IMR-90 (cell line): ENCODE measurements at regions of chr3 and their contacts with region 1.

Region 1: DNA sequence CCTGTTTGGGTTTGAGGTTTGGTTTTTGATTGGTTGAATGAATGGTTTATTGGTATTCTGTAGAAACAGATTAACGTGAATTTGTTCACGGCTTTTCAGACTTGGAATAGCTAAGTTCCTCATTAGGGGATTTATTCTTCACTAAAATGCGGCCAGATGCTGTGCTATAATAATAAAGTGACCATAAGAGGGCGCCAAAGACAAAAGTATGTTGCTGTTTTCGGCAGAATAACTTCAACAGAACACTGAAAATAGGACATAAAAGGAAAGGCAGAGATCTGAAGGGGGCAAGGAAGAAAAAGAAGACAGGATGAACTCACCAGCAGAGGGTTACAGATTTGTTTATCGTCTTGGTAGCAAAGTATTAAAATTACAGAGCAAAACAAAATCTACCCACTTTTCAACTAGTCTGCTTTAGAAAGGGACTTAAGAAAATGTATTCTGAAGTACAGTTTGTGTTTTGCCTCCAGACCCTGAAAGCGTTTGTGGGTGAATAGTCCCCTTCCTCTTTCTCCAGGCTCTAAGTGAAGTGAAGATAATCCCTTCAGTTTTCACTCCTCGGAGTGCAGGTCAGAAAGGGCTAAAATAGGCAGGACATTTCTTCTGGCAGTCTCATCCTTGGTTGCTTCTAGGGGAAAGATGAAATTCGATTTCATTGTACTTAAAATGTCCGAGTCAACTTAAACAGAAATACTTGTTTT is 147.6 kb downstream of the IL20RB start:
- DNase-seq: peak; percentile 62
- ATAC-seq: peak; percentile 88
- H3K4me3 ChIP-seq: no peak overlapping the region
- H3K27ac ChIP-seq: no peak overlapping the region
- H3K4me1 ChIP-seq: no peaks in the 10 kb centered on the region
- H3K27me3 ChIP-seq: peaks cover 5% of the 10 kb centered on the region
- CTCF ChIP-seq: peak; percentile 70
- POLR2A ChIP-seq: no peak
- RAD21 ChIP-seq: peak; percentile 63

Region 2: DNA sequence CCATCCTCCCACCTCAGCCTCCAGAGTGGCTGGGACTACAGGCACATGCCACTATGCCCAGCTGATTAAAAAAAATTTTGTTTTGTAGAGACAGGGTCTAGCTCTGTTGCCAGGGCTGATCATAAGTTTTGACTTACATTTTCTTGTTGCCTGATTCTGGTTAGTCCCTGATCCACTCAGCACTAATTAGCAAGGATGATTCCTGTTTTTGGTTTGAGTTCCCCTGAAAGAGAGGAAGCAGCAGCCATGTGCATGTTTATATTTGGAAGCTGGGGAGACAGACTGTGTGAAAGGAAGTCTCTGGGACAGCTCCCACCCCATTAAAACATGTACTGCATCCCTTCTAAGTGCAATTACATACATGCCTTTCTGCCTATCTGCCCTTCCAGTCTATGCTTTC is 247.0 kb before region 1 on chr3:
- CTCF ChIA-PET with region 1: no interaction called
- POLR2A ChIA-PET with region 1: no interaction called
- dilution Hi-C with region 1: no loop called
- in situ Hi-C with region 1: no loop called
- intact Hi-C with region 1: no loop called
- DNase-seq: no peak
- ATAC-seq: no peak
- H3K4me3 ChIP-seq: no peak overlapping the region
- H3K27ac ChIP-seq: no peak overlapping the region
- H3K4me1 ChIP-seq: peaks cover 7% of the 10 kb centered on the region
- H3K27me3 ChIP-seq: no peaks in the 10 kb centered on the region
- CTCF ChIP-seq: no peak
- POLR2A ChIP-seq: no peak
- RAD21 ChIP-seq: no peak

Region 3: DNA sequence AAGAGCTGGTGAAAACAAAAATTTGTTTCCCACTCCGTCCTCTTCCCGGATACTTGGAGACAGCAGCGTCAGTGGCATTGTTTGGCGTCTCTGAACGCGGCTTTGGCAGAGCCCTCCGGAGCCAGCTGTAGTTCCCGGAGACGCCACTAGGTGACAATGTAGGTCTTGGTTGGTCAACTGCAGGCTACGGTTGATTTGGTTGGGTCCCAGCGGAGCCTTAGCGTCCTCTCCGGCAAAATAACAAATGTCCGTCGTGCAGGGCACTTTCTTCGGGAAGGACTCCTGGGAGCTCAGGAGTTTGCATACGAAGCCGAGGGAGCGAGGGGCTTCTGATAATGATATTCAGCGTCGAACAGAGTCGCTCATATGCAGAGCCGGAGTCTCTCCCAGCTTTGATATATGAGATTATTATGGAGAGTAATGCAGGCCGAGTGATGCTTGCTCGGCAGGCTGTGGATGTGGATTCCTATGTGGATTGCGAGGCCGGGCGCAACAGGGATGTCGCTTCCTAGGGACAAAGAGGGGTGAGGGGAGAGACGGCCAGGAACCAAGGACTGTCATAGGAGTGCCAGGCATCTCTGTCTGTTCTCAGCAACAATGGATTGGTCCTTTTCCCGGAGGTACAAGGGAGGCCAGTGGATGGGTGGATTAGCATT is 72.8 kb before region 1 on chr3:
- CTCF ChIA-PET with region 1: interaction called, 6 read pairs
- POLR2A ChIA-PET with region 1: no interaction called
- dilution Hi-C with region 1: no loop called
- in situ Hi-C with region 1: no loop called
- intact Hi-C with region 1: loop called (anchors 1 kb)
- DNase-seq: peak; percentile 76
- ATAC-seq: peak; percentile 98
- H3K4me3 ChIP-seq: peak overlapping the region; percentile 41
- H3K27ac ChIP-seq: no peak overlapping the region
- H3K4me1 ChIP-seq: no peaks in the 10 kb centered on the region
- H3K27me3 ChIP-seq: peaks cover 2% of the 10 kb centered on the region
- CTCF ChIP-seq: peak; percentile 83
- POLR2A ChIP-seq: no peak
- RAD21 ChIP-seq: peak; percentile 73

Region 4: GRCh38 chr3:137150825-137151224 is 45.4 kb after region 1 on chr3:
- CTCF ChIA-PET with region 1: no interaction called
- POLR2A ChIA-PET with region 1: no interaction called
- dilution Hi-C with region 1: no loop called
- in situ Hi-C with region 1: no loop called
- intact Hi-C with region 1: no loop called
- DNase-seq: no peak
- ATAC-seq: no peak
- H3K4me3 ChIP-seq: no peak overlapping the region
- H3K27ac ChIP-seq: no peak overlapping the region
- H3K4me1 ChIP-seq: no peaks in the 10 kb centered on the region
- H3K27me3 ChIP-seq: no peaks in the 10 kb centered on the region
- CTCF ChIP-seq: no peak
- POLR2A ChIP-seq: no peak
- RAD21 ChIP-seq: no peak

Region 5: DNA sequence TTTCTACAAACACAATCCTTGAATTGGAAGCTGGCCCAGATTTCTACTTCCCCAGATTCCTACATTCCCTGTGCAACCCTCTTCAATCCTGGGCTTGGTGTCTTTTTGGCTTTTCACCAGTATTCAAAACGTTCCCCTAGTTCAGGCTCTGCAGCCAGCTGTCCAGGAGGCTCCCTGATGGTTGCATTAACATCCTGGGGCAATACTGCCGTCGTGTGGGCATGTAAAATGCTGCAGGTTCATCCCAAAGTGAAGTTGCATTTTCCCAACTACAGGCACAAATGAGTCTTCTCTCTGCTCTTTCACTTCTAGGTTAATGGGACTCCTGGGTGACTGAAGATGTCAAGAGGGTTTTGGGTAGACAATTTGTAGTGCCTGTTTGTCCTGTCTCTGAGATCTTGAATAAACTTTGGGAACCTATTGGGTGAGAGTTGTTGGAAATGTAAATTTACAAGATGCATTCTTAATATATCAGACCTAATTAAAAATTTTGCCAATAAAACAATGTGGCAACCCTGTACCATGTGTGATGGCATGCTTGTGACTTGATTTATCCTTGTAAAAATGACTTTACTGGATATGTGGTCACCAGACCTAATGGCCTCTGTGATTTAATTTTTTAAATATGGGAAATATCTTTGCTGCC is 687.3 kb after region 1 on chr3:
- CTCF ChIA-PET with region 1: interaction called, 3 read pairs
- POLR2A ChIA-PET with region 1: no interaction called
- dilution Hi-C with region 1: no loop called
- in situ Hi-C with region 1: no loop called
- intact Hi-C with region 1: loop called (anchors 5 kb)
- DNase-seq: peak; percentile 27
- ATAC-seq: no peak
- H3K4me3 ChIP-seq: no peak overlapping the region
- H3K27ac ChIP-seq: no peak overlapping the region
- H3K4me1 ChIP-seq: no peaks in the 10 kb centered on the region
- H3K27me3 ChIP-seq: no peaks in the 10 kb centered on the region
- CTCF ChIP-seq: peak; percentile 54
- POLR2A ChIP-seq: no peak
- RAD21 ChIP-seq: peak; percentile 59

Region 6: DNA sequence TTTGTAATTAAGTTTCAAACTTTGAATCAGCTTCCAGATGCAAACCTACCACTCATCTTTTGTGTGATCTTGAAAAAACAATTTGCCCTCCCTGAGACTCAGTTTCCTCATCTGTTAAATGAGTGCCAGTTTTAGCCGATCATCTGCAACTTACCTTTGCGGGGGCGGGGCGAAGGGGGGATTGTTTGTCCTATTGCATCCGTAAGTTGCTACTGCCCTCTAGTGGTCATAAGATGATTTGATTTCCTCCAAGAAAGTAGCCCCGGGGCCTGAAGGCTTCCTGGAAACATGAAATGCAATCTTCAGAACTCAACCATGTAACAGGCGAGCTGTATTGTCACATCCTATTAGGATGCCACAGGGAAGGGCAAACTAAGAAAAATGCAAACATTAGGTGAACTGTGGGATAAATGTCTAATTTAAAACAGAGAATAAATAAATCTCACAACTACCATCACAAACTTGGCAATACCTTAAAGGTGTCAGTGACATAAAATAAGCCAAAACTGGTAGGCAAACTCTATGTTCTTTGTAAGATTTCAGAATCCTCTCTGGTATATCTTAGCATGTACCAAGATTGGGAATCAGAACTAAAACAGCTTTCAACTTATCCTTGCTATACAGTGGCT is 841.0 kb after region 1 on chr3:
- CTCF ChIA-PET with region 1: interaction called, 3 read pairs
- POLR2A ChIA-PET with region 1: no interaction called
- dilution Hi-C with region 1: no loop called
- in situ Hi-C with region 1: loop called (anchors 10 kb)
- intact Hi-C with region 1: loop called (anchors 1 kb)
- DNase-seq: peak; percentile 71
- ATAC-seq: peak; percentile 63; the same call in 1 of the 2 replicates
- H3K4me3 ChIP-seq: no peak overlapping the region
- H3K27ac ChIP-seq: no peak overlapping the region
- H3K4me1 ChIP-seq: no peaks in the 10 kb centered on the region
- H3K27me3 ChIP-seq: no peaks in the 10 kb centered on the region; the same call in none of the 2 replicates
- CTCF ChIP-seq: peak; percentile 70
- POLR2A ChIP-seq: no peak
- RAD21 ChIP-seq: peak; percentile 71

Region 7: DNA sequence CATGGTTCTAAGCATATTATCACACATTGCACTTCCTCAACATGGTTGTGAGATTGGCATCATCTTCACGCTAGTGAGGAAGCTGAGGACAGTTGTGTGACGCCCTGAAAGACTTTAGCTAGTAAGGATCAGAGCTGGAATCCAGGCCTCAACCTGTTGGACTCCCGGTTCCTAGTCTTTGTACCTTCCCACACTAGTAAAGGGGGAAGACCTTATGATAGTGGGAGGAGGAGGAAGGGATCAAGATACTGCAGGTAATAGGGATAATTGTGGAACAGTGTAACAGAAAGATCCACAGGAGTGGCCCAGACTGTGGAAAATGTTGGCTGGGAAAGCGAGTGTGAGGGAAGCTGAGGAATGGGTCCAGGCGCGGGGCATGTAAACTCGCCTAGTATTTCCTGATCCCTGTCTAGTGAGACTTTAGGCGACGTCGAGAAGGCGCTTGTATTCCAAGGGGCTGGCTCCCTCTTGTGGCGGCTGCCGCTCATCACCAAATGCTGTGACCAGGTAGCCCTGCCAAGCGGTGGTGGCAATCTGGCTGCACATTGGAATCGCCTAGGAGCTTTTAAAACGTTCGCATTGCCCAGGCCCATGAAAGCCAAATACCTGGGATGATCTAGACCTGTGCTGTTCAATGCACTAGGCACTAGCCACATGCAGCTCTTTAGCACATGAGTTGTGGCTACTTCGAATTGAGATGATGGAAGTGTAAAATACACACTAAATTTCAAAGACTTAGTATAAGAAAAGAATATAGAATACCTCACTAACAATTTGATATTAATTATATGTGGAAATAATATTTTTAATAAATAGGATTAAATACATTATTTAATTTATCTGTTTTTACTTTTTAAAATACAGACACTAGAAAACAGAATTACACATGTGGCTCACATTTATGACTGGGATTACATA is 865.7 kb after region 1 on chr3:
- CTCF ChIA-PET with region 1: no interaction called
- POLR2A ChIA-PET with region 1: no interaction called
- dilution Hi-C with region 1: no loop called
- in situ Hi-C with region 1: no loop called
- intact Hi-C with region 1: loop called (anchors 1 kb)
- DNase-seq: peak; percentile 50
- ATAC-seq: peak; percentile 99
- H3K4me3 ChIP-seq: no peak overlapping the region
- H3K27ac ChIP-seq: no peak overlapping the region
- H3K4me1 ChIP-seq: no peaks in the 10 kb centered on the region
- H3K27me3 ChIP-seq: peaks cover 1% of the 10 kb centered on the region
- CTCF ChIP-seq: peak; percentile 81
- POLR2A ChIP-seq: no peak
- RAD21 ChIP-seq: peak; percentile 72